IMR-90 (cell line): ENCODE measurements at regions of chrX and their contacts with region 1.

Region 1: GRCh38 chrX:13535376-13536165 is 33.8 kb upstream of the EGFL6 start:
- DNase-seq: no peak
- ATAC-seq: no peak
- H3K4me3 ChIP-seq: no peak overlapping the region
- H3K27ac ChIP-seq: no peak overlapping the region
- H3K4me1 ChIP-seq: peaks cover 2% of the 10 kb centered on the region; the same call in 1 of the 2 replicates
- H3K27me3 ChIP-seq: peaks cover 8% of the 10 kb centered on the region
- CTCF ChIP-seq: no peak
- POLR2A ChIP-seq: no peak
- RAD21 ChIP-seq: no peak

Region 2: DNA sequence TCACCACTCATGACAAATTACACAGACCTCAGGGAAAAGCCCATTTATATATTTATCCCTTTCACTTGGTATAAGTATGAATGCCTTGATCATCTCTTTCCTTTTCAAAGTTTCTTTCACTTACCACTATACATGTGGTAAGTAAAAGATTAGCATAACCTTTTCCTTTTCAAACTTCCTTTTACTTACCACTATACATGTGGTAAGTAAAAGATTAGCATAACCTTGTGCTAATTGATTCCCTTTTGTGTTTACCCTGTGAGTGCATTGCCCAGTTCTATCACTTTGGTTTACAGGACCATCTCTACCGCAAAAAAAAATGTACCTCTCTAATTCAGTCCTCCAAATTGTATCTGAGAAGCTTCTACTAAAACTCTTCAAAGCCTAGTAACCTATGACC is 84.6 kb after region 1 on chrX:
- CTCF ChIA-PET with region 1: no interaction called
- POLR2A ChIA-PET with region 1: no interaction called
- dilution Hi-C with region 1: no loop called
- in situ Hi-C with region 1: no loop called
- intact Hi-C with region 1: loop called (anchors 5 kb)
- DNase-seq: no peak
- ATAC-seq: no peak
- H3K4me3 ChIP-seq: no peak overlapping the region
- H3K27ac ChIP-seq: no peak overlapping the region
- H3K4me1 ChIP-seq: no peaks in the 10 kb centered on the region
- H3K27me3 ChIP-seq: peaks cover 12% of the 10 kb centered on the region
- CTCF ChIP-seq: no peak
- POLR2A ChIP-seq: no peak
- RAD21 ChIP-seq: no peak

Region 3: DNA sequence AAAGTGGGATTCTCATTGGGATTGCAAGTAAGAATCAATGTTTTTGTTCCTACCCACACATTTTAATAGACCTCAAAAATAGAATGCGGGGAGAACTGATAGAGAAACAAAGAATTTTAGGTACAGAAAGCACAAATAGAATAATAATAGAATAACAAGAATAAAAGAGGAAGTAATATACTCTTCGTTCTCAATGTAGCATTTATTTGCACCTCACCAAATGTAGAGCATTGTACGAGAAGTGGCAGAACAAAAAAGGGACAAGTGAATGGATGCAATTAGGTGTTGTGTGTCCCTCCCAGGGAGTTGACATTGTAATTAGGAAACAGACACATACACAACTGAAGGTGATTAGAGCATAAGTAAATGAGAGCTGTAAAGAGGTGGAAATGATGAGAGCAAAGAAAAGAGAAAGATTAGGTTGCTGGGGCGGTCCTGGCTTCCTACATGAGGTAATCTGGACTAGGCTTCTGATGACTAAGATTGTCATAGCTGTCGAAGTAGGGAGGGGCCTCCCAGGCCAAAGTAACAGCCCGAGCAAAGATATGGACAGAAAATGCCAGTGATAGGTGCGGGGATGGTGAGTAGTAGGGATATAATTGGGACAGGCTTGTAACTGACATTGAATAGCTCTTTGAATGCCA is 163.7 kb after region 1 on chrX:
- CTCF ChIA-PET with region 1: no interaction called
- POLR2A ChIA-PET with region 1: no interaction called
- dilution Hi-C with region 1: no loop called
- in situ Hi-C with region 1: no loop called
- intact Hi-C with region 1: no loop called
- DNase-seq: peak; percentile 23
- ATAC-seq: no peak
- H3K4me3 ChIP-seq: no peak overlapping the region
- H3K27ac ChIP-seq: no peak overlapping the region
- H3K4me1 ChIP-seq: peaks cover 9% of the 10 kb centered on the region
- H3K27me3 ChIP-seq: no peaks in the 10 kb centered on the region; the same call in 1 of the 2 replicates
- CTCF ChIP-seq: no peak
- POLR2A ChIP-seq: no peak
- RAD21 ChIP-seq: no peak

Region 4: GRCh38 chrX:13898083-13898482 is 362.5 kb after region 1 on chrX:
- CTCF ChIA-PET with region 1: no interaction called
- POLR2A ChIA-PET with region 1: no interaction called
- dilution Hi-C with region 1: no loop called
- in situ Hi-C with region 1: no loop called
- intact Hi-C with region 1: no loop called
- DNase-seq: peak; percentile 22
- ATAC-seq: no peak
- H3K4me3 ChIP-seq: no peak overlapping the region
- H3K27ac ChIP-seq: no peak overlapping the region
- H3K4me1 ChIP-seq: peaks cover under 1% of the 10 kb centered on the region; the same call in 1 of the 2 replicates
- H3K27me3 ChIP-seq: peaks cover 3% of the 10 kb centered on the region; the same call in 1 of the 2 replicates
- CTCF ChIP-seq: 0 out of 2 replicates have a peak, but pooled peaks have one; percentile 13
- POLR2A ChIP-seq: no peak
- RAD21 ChIP-seq: 0 out of 2 replicates have a peak, but pooled peaks have one; percentile 9